Endothelial cell of umbilical vein (primary cell): ENCODE measurements at regions of chr10 and their contacts with region 1.

Region 1: DNA sequence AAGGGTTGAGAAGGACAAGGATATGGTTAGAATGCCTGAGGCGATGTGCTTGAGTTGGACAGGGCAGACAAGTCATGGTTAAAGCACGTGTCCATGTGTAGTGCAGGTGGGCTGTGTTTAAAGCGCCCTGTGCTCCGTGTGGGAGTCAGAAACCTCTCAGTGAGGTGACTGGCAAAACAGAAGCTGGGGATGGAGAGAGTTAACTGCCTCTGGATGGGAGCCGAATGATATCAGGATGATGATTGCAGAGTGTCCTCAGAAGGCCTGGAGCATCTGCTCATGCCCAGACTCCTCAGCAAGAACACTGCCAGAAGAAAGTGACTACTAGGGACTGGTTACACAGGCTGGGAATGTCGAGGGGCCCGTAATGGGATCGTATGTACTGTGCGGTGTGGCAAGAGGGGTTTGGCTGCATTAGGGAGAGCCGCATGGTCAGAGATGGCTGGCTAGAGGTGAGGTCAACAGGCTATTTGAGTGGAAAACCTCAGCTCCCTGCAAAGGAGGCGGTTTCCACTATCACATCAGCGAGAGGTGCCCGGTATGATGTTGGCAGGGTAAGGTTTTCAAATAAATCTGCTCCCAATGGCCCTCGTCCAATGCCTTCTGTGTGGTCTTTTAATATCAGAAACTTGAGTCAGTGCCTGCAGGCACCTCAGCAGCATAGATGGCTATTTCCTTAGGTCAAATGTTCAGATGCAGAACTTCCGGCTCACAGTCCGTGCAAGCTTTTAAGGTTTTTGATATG is 26.1 kb upstream of the MRC1 start:
- DNase-seq: peak; percentile 94
- H3K4me3 ChIP-seq: no peak overlapping the region
- H3K27ac ChIP-seq: peak overlapping the region; percentile 35
- H3K4me1 ChIP-seq: peaks cover 31% of the 10 kb centered on the region
- H3K27me3 ChIP-seq: no peaks in the 10 kb centered on the region
- CTCF ChIP-seq: no peak
- POLR2A ChIP-seq: peak; percentile 76

Region 2: GRCh38 chr10:17742918-17743317 is 40.2 kb before region 1 on chr10:
- CTCF ChIA-PET with region 1: interaction called, 8 read pairs
- POLR2A ChIA-PET with region 1: interaction called, 3 read pairs
- dilution Hi-C with region 1: no loop called
- intact Hi-C with region 1: loop called (anchors 1 kb)
- DNase-seq: peak; percentile 66
- H3K4me3 ChIP-seq: no peak overlapping the region
- H3K27ac ChIP-seq: no peak overlapping the region
- H3K4me1 ChIP-seq: peaks cover 25% of the 10 kb centered on the region
- H3K27me3 ChIP-seq: no peaks in the 10 kb centered on the region
- CTCF ChIP-seq: peak; percentile 67 to 75
- POLR2A ChIP-seq: no peak

Region 3: DNA sequence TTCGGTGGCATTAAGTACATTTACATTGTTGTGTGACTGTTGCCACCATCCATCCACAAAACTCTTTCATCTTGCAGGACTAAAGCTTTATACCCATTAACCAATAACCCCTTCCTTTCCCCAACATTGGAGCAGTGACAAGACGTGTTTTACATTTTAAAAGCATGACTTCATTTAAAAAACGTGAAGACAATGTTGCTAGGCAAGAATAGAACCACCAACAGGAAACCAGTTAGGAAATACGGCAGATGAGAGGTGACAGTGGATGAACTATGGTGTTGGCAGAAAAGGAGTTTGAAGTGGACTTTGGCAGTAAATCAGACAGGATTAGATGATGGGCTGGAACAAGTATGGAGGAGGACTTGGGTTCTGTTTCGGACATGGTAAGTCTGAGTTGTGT is 14.1 kb before region 1 on chr10:
- CTCF ChIA-PET with region 1: no interaction called
- POLR2A ChIA-PET with region 1: no interaction called
- dilution Hi-C with region 1: no loop called
- intact Hi-C with region 1: loop called (anchors 1 kb)
- DNase-seq: peak; percentile 93
- H3K4me3 ChIP-seq: no peak overlapping the region
- H3K27ac ChIP-seq: peak overlapping the region; percentile 24
- H3K4me1 ChIP-seq: peaks cover 16% of the 10 kb centered on the region
- H3K27me3 ChIP-seq: no peaks in the 10 kb centered on the region
- CTCF ChIP-seq: no peak
- POLR2A ChIP-seq: no peak

Region 4: GRCh38 chr10:17805921-17806577 is 23.0 kb after region 1 on chr10:
- CTCF ChIA-PET with region 1: interaction called, 5 read pairs
- POLR2A ChIA-PET with region 1: no interaction called
- dilution Hi-C with region 1: no loop called
- intact Hi-C with region 1: loop called (anchors 1 kb)
- DNase-seq: no peak
- H3K4me3 ChIP-seq: no peak overlapping the region
- H3K27ac ChIP-seq: no peak overlapping the region
- H3K4me1 ChIP-seq: peaks cover 16% of the 10 kb centered on the region
- H3K27me3 ChIP-seq: no peaks in the 10 kb centered on the region
- CTCF ChIP-seq: peak in 1 of 2 donors; percentile 23
- POLR2A ChIP-seq: no peak

Region 5: DNA sequence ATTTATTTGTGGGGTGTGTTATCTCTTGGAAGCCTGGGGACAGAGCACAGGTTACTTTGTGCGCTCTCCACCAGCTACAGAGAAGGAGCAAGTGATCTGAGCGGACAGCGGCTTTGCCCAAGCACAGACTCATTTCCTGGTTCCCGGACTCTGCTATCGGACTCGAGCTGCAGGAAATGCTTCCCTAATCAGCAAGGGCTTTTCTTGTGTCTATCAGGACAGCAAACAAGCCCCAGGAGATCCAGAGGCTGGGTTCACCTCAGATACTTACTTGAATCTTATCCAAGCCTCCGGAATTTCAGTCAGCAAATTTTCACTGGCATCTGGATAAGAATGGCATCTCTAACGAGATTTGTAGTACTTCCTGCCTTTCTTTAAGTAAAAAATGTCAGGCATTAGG is 53.8 kb after region 1 on chr10:
- CTCF ChIA-PET with region 1: interaction called, 3 read pairs
- POLR2A ChIA-PET with region 1: no interaction called
- dilution Hi-C with region 1: no loop called
- intact Hi-C with region 1: loop called (anchors 2 kb)
- DNase-seq: peak; percentile 87
- H3K4me3 ChIP-seq: peak overlapping the region in 1 of 3 experiments; percentile 28
- H3K27ac ChIP-seq: peak overlapping the region; percentile 62
- H3K4me1 ChIP-seq: peaks cover 20% of the 10 kb centered on the region
- H3K27me3 ChIP-seq: no peaks in the 10 kb centered on the region
- CTCF ChIP-seq: no peak
- POLR2A ChIP-seq: no peak